Cardiac septum (tissue), 1 donor: ENCODE measurements at regions of chr10 and their contacts with region 1.

Region 1: DNA sequence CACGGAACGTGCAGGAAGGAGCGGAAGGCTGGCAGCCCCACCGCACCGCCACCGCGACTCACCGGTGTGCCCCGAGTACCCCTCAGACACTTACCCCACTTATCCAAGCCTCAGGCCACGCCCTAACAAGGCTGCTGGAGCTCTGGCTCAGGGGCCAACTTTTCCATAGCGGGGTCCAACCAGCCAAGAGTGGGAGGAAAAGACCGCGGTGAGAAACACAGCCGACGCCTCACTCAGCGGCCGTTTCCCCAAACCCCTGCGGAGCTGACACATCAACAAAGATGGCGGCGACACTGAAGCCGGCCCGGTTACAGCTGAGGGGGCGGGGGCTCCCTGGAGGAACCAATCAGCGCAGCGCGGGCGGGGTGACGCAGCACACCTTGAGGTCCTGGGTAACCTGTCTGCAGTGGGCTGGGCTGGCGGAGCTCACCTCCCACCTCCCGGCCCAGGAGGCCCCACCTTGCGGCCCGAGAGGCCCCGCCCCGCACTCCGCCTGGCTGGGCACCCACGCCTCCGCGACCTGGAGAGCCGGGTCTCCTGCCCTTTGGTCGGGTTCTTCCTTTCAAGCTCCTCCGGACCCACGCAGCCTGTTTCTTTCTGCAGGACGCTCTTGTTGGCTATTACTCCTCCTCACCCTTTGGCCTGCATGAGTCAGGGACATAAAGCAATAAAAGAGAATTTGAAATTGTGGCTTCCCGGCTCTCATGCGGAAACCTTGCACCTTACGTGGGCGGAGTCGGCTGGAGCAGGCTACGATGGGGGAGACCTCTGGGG is at the start of gene CCDC186:
- DNase-seq: peak; percentile 98
- total RNA-seq, gene CCDC186: 19.5 TPM

Region 2: GRCh38 chr10:114271779-114272167 is 97.7 kb after region 1 on chr10:
- intact Hi-C with region 1: loop called (anchors 5 kb)
- DNase-seq: peak; percentile 72